ENCODE measurements at regions of chr1 and their contacts with region 1.

Region 1: DNA sequence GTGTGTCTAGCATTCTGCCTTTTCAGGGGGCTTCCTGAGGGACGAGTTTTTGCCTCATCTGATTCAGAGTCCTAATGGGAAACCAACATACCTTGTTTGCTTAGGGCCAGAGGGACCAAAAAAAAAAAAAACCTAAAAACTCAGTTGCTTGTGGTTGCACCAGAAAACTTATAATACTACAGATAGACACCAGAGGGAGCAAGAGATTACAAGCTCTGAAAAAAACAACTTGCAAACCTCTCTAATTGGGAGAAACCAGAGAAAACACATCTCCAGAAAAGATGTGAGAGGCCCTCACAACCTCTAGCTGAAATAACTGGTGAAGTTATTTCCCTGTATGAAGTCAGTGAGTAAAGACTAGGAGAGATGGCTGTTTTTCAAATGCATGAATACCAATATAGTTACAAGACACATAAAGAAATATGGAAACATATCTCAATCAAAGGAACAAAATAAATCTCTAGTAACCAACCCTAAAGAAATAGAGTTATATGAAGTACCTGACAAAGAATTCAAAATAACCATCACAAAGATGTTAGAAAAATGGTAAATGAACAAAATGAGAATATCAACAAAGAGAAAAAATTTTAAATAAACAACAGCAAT is 233.7 kb upstream of the NFIA start:
- DNase-seq: peak; percentile 38
- H3K4me3 Mint-ChIP-seq: no peak overlapping the region
- H3K27ac Mint-ChIP-seq: no peak overlapping the region
- H3K4me1 Mint-ChIP-seq: peaks cover 13% of the 10 kb centered on the region
- H3K27me3 Mint-ChIP-seq: peaks cover 20% of the 10 kb centered on the region
- CTCF ChIP-seq: peak; percentile 71

Region 2: DNA sequence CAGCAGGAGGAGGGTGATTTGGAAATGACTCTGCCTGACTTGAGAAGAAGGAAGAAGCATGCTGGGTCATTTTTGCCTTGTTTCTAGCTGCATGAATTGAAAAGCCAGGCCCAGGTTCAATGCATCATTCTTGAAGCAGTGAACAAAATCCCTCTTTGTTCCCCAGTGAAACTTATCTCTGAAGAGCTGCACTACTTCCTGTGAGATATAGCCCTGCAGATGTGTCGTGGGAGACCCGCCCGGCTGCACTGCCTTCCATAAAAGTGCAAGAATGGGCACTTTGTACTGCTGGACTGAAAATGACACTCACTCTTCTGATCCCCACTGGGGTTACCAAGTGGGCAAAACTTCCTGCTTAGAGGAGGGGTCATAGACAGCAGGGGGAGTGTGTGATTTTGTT is 15.5 kb before region 1 on chr1:
- CTCF ChIA-PET with region 1: interaction called, 13 read pairs
- POLR2A ChIA-PET with region 1: no interaction called
- intact Hi-C with region 1: no loop called
- DNase-seq: no peak
- H3K4me3 Mint-ChIP-seq: no peak overlapping the region
- H3K27ac Mint-ChIP-seq: no peak overlapping the region
- H3K4me1 Mint-ChIP-seq: no peaks in the 10 kb centered on the region
- H3K27me3 Mint-ChIP-seq: peaks cover 81% of the 10 kb centered on the region
- CTCF ChIP-seq: no peak

Region 3: GRCh38 chr1:60969971-60970509 is 121.4 kb after region 1 on chr1:
- CTCF ChIA-PET with region 1: no interaction called
- POLR2A ChIA-PET with region 1: no interaction called
- intact Hi-C with region 1: loop called (anchors 5 kb)
- DNase-seq: peak; percentile 43
- H3K4me3 Mint-ChIP-seq: no peak overlapping the region
- H3K27ac Mint-ChIP-seq: no peak overlapping the region
- H3K4me1 Mint-ChIP-seq: peaks cover 18% of the 10 kb centered on the region
- H3K27me3 Mint-ChIP-seq: no peaks in the 10 kb centered on the region
- CTCF ChIP-seq: peak; percentile 46